Right cardiac atrium (tissue), 5 donors: ENCODE measurements at regions of chr7 and their contacts with region 1.

Region 1: GRCh38 chr7:150860291-150860977 is 8.1 kb downstream of the AOC1 start:
- DNase-seq: no peak
- ATAC-seq: peak; percentile 23 to 39
- H3K4me3 ChIP-seq: no peak overlapping the region
- H3K27ac ChIP-seq: no peak overlapping the region
- H3K4me1 ChIP-seq: no peaks in the 10 kb centered on the region
- H3K27me3 ChIP-seq: no peaks in the 10 kb centered on the region

Region 2: DNA sequence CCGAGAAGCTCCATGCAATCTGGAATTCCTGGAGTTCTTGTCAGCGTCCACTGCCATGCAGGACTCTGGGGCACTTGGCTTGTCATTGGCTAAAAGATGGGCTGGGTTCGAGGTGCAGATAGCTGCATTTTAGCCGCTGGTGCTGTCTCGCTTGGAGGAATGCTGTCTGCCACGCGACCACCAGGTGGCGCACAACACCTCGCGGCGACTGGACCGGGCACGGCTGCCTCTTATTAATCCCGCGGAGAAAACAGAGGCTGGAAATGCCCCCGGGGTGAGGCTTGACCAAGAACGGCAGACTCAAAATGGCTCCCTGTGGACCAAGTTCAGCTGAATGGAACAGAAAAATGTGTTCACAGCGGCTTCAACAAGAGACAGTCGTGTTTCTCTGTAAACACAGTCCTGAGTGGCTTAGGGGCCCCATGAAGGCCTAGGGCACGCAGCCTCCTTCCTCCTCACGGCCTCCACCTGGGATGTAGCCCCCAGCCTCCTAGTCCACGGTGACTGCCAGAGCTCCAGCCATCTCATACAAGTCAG is 38.1 kb after region 1 on chr7:
- intact Hi-C with region 1: no loop called
- DNase-seq: peak; percentile 79 to 92 (median 92)
- ATAC-seq: peak; percentile 70 to 74
- H3K4me3 ChIP-seq: no peak overlapping the region
- H3K27ac ChIP-seq: no peak overlapping the region
- H3K4me1 ChIP-seq: no peaks in the 10 kb centered on the region
- H3K27me3 ChIP-seq: no peaks in the 10 kb centered on the region

Region 3: DNA sequence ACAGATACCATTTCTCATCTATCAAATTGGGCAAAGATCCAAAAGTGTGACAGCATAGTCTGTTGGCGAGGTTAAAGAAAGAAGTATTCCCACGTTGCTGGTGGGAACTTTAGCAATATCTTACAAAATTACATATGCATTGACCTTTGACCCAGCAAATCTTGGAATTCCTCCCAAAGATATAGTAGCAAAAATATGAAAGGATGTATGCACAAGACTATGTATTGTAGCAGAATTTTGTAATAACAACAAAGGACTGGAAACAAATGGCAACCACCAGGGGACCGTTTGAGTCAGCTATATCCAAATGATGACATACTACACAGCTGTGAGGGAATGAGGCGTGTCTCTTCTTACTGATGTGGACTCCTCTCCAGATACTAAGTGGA is 67.5 kb after region 1 on chr7:
- intact Hi-C with region 1: loop called in 1 of 4 experiments (anchors 10 kb)
- DNase-seq: no peak
- ATAC-seq: no peak
- H3K4me3 ChIP-seq: no peak overlapping the region
- H3K27ac ChIP-seq: no peak overlapping the region
- H3K4me1 ChIP-seq: no peaks in the 10 kb centered on the region
- H3K27me3 ChIP-seq: no peaks in the 10 kb centered on the region